ENCODE measurements at regions of chr1 and their contacts with region 1.

Region 1: DNA sequence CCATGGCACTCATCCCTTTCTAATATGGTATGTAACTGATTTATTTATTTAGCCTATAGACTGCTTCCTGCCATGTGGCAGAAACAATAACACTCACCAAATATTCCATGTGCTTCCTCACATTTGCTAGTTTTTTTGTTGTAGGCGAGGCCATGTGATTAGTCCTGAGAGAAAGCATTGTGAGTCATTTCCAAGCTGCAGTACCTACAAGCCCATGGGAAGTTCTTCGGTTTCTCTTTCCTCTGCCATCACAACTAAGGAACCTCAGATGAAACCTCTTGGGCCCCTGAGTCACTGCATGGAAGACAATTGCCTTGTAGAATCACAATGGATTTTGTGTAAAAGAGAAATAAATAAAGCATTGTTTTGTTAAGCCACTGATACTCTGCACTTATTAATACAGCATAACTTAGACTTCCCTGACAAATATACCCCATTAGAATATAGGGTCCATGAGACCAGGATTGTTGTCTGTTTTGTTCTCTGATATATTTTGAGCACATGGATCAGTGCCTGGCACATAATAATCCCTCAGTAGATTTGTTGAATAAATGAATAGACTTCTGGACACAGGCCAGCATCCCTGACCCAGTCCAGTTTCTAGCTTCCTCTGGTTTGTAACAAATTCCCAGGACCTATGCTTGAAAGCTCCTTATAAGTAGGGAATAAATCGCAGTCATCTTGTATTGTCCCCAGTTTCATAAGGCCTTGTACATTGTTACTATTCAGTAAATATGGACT is 58.3 kb upstream of the GADD45A start:
- DNase-seq: peak; percentile 100
- H3K4me3 ChIP-seq: no peak overlapping the region
- H3K27ac ChIP-seq: peak overlapping the region; percentile 97
- H3K4me1 ChIP-seq: peaks cover 55% of the 10 kb centered on the region
- H3K27me3 ChIP-seq: no peaks in the 10 kb centered on the region
- CTCF ChIP-seq: no peak

Region 2: GRCh38 chr1:67570473-67571143 is 56.1 kb before region 1 on chr1:
- CTCF ChIA-PET with region 1: no interaction called
- dilution Hi-C with region 1: loop called (anchors 5 kb)
- in situ Hi-C with region 1: loop called in 1 of 2 experiments (anchors 5 kb)
- intact Hi-C with region 1: loop called (anchors 2 kb)
- DNase-seq: peak; percentile 99
- H3K4me3 ChIP-seq: no peak overlapping the region
- H3K27ac ChIP-seq: peak overlapping the region; percentile 97
- H3K4me1 ChIP-seq: peaks cover 53% of the 10 kb centered on the region
- H3K27me3 ChIP-seq: no peaks in the 10 kb centered on the region
- CTCF ChIP-seq: no peak

Region 3: DNA sequence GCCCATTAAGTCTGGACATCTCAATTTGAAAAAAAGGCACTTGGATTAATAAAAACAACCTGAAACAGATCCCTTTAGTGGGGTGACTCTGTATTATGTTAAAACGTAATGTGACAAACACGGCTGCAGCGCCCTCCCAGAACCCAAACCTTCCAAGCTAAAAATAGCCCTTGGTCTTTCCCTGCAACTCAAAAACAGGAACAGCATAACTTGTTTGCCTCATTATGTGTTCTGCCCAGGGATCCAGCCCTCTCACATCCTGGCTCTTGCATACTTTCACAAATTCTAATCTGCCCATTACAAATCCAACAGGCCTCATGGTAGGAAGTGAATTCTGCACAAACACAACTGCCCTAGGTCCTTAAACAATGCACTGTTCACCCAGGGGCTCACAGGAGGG is 36.3 kb before region 1 on chr1:
- CTCF ChIA-PET with region 1: no interaction called
- dilution Hi-C with region 1: no loop called
- in situ Hi-C with region 1: no loop called
- intact Hi-C with region 1: no loop called
- DNase-seq: no peak
- H3K4me3 ChIP-seq: no peak overlapping the region
- H3K27ac ChIP-seq: no peak overlapping the region
- H3K4me1 ChIP-seq: no peaks in the 10 kb centered on the region
- H3K27me3 ChIP-seq: no peaks in the 10 kb centered on the region
- CTCF ChIP-seq: no peak